Stomach (tissue), 19 donors: ENCODE measurements at regions of chr5 and their contacts with region 1.

Region 1: DNA sequence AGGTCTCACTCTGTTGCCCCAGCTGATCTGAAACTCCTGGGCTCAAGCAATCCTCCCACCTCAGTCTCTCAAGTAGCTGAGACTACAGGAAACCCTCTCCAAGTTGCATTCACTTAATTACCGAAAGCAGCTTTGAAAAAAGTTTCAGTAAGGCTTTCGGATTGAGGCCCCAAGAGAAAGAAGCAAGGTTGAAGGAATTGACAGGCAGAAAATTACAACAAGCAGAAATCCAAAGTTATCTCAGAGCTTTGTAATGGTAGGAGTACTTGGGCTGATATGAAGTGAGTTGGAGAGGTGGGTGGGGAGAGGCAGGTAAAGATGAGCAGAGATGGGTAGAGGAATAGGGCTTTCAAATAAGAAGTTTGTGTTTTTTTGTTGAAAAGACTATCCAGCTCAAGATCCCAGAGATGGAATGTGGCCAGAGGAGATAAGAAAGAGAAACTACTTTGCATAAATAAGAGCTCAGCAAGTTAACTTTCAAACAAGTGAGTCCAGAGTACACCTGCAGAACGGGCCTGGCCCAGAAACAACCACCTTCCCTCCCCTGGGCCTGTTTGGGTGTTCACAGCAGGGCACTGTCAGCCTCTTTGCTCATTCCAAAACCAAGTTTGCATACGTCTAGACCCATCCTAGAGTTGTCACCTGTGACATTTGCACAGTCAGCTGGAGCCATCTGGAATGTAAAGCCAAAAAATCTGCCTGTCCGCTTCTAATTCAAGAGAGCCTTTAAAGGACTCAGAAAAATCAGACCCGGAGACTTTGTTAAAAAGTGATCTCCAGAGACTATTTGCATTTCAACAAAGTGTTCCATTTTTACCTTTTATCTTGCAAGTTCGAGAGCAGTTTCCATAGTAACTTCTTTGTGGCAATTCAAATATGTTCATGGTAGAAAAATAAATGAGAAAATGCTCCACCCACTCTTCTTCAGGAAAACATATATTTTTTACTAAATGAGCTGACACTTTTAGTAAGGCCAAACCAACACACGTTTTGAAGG is 2.3 kb upstream of the CLINT1 start:
- DNase-seq: peak in 1 of 2 donors; percentile 51
- H3K4me3 ChIP-seq: no peak overlapping the region
- H3K27ac ChIP-seq: no peak overlapping the region
- H3K4me1 ChIP-seq: peaks cover 3 to 36% (median 27%) of the 10 kb centered on the region in 4 donors
- H3K27me3 ChIP-seq: no peaks in the 10 kb centered on the region
- CTCF ChIP-seq: no peak
- EP300 ChIP-seq: no peak
- POLR2A ChIP-seq: no peak

Region 2: GRCh38 chr5:157948738-157949410 is 87.7 kb after region 1 on chr5:
- intact Hi-C with region 1: loop called (anchors 10 kb)
- DNase-seq: peak; percentile 91 to 96
- H3K4me3 ChIP-seq: no peak overlapping the region
- H3K27ac ChIP-seq: peak overlapping the region in 4 of 5 donors; percentile 18 to 75 (median 48)
- H3K4me1 ChIP-seq: peaks cover 8 to 14% (median 11%) of the 10 kb centered on the region in 4 donors
- H3K27me3 ChIP-seq: no peaks in the 10 kb centered on the region
- CTCF ChIP-seq: peak in 5 of 7 experiments; percentile 66 to 91 (median 67)
- EP300 ChIP-seq: no peak
- POLR2A ChIP-seq: no peak